B cell (primary cell): ENCODE measurements at regions of chr14 and their contacts with region 1.

Region 1: GRCh38 chr14:51979088-51979709 is 10.1 kb upstream of the RTRAF start:
- DNase-seq: peak; percentile 83
- ATAC-seq: peak; percentile 66
- H3K4me3 ChIP-seq: no peak overlapping the region
- H3K4me3 Mint-ChIP-seq: no peak overlapping the region
- H3K27ac ChIP-seq: no peak overlapping the region
- H3K27ac Mint-ChIP-seq: no peak overlapping the region
- H3K4me1 ChIP-seq: peaks cover 5 to 6% of the 10 kb centered on the region in 2 donors
- H3K4me1 Mint-ChIP-seq: peaks cover 5% of the 10 kb centered on the region
- H3K27me3 ChIP-seq: no peaks in the 10 kb centered on the region
- H3K27me3 Mint-ChIP-seq: no peaks in the 10 kb centered on the region
- CTCF ChIP-seq: peak; percentile 96

Region 2: GRCh38 chr14:51780006-51780692 is 199.1 kb before region 1 on chr14:
- CTCF ChIA-PET with region 1: interaction called, 79 read pairs
- POLR2A ChIA-PET with region 1: no interaction called
- intact Hi-C with region 1: loop called (anchors 1 kb)
- DNase-seq: peak; percentile 80
- ATAC-seq: peak; percentile 80
- H3K4me3 ChIP-seq: no peak overlapping the region
- H3K4me3 Mint-ChIP-seq: no peak overlapping the region
- H3K27ac ChIP-seq: no peak overlapping the region
- H3K27ac Mint-ChIP-seq: no peak overlapping the region
- H3K4me1 ChIP-seq: peaks cover 7 to 11% of the 10 kb centered on the region in 2 donors
- H3K4me1 Mint-ChIP-seq: peaks cover 10% of the 10 kb centered on the region
- H3K27me3 ChIP-seq: peaks cover 0 to 16% (median 4%) of the 10 kb centered on the region in 4 experiments
- H3K27me3 Mint-ChIP-seq: peaks cover 32% of the 10 kb centered on the region
- CTCF ChIP-seq: peak; percentile 90

Region 3: DNA sequence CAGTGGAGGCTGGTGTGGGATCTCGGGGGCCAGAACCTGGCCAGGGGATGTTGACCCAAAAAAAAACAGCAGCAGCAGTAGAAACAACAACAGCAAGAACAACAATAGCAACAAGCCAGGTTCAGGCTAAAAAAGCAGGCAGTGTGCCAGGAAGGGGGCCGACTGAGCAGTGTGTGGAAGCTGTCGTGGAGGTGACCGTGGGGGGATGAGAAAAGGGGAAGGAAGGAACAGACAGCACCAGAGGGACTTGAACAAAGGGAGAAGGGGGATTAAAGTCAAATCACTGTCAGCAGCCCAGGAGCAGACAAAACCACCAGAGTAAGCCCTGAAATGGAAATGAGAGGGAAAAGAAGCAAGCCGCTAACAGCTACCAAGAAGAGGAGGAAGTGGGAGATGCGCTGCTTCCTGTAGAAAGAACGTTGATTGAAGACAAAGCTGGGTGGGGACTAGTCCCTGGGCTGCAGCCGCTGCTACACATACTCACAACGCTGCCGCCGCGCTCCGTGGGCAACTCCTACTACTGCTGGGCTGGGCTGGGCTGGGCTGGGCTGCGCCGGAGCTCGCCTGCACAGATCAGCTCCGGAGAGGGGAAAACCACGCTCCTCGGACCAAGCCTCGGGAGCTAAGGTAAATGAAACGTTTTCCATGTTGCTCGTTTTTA is 118.9 kb before region 1 on chr14 and contains the start of gene GNG2:
- CTCF ChIA-PET with region 1: interaction called, 21 read pairs
- POLR2A ChIA-PET with region 1: no interaction called
- intact Hi-C with region 1: no loop called
- DNase-seq: peak; percentile 87
- ATAC-seq: peak; percentile 96
- H3K4me3 ChIP-seq: peak within 1 kb of the TSS; percentile 77 to 95 (median 86)
- H3K4me3 Mint-ChIP-seq: peak within 1 kb of the TSS; percentile 92
- H3K27ac ChIP-seq: peak within 1 kb of the TSS; percentile 80 to 84
- H3K27ac Mint-ChIP-seq: peak within 1 kb of the TSS; percentile 87
- H3K4me1 ChIP-seq: peaks cover 37 to 46% of the 10 kb centered on the region in 2 donors
- H3K4me1 Mint-ChIP-seq: peaks cover 68% of the 10 kb centered on the region
- H3K27me3 ChIP-seq: no peaks in the 10 kb centered on the region
- H3K27me3 Mint-ChIP-seq: no peaks in the 10 kb centered on the region
- CTCF ChIP-seq: no peak
- total RNA-seq, gene GNG2: 57.6 and 69.8 TPM in 2 replicates

Region 4: DNA sequence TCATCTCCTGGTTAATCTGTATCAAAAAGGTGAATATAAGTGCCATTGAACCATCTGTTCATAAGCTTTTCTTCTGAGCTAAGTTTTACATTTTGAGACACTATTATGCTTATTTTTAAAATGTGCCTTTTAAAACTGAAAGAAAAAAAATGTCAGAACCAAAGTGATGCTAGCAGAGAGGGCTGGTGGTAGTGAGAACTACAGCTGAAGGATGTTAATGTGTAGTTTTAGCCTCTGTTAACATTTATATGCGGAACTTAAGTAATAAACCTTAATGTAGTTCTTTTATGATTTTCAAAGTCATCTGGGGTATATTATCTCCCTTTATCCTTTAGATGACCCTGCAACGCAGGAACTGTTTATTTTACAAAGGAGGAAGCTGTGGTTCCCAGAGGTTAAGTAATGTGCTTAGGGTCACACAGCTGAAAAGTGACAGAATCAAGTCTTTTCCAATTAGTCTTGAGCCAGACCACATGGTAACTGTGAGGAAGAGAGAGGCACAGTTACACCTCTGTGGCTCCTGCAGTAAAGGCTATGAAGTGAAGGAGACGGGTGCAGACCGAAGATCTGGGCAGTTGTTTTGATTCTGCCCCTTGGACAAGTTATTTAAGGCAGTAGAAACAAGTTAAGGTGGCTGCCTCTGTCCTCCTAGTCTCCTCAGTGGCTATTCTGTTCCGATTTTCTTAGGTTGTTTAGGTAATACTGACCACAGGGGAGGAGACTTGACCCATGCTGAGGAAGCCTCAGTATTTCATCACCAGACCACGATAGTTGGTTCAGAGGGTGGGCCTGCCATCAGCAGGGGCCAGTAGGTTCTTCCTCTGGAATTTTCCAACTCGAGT is 94.9 kb before region 1 on chr14:
- CTCF ChIA-PET with region 1: interaction called, 5 read pairs
- POLR2A ChIA-PET with region 1: no interaction called
- intact Hi-C with region 1: loop called (anchors 5 kb)
- DNase-seq: peak; percentile 40
- ATAC-seq: peak; percentile 14
- H3K4me3 ChIP-seq: no peak overlapping the region
- H3K4me3 Mint-ChIP-seq: peak overlapping the region; percentile 17
- H3K27ac ChIP-seq: peak overlapping the region; percentile 8 to 19
- H3K27ac Mint-ChIP-seq: peak overlapping the region; percentile 67
- H3K4me1 ChIP-seq: peaks cover 31 to 39% of the 10 kb centered on the region in 2 donors
- H3K4me1 Mint-ChIP-seq: peaks cover 55% of the 10 kb centered on the region
- H3K27me3 ChIP-seq: no peaks in the 10 kb centered on the region
- H3K27me3 Mint-ChIP-seq: no peaks in the 10 kb centered on the region
- CTCF ChIP-seq: no peak

Region 5: GRCh38 chr14:51963286-51963685 is 15.9 kb before region 1 on chr14:
- CTCF ChIA-PET with region 1: interaction called, 30 read pairs
- POLR2A ChIA-PET with region 1: no interaction called
- intact Hi-C with region 1: no loop called
- DNase-seq: no peak
- ATAC-seq: no peak
- H3K4me3 ChIP-seq: no peak overlapping the region
- H3K4me3 Mint-ChIP-seq: no peak overlapping the region
- H3K27ac ChIP-seq: no peak overlapping the region
- H3K27ac Mint-ChIP-seq: no peak overlapping the region
- H3K4me1 ChIP-seq: no peaks in the 10 kb centered on the region
- H3K4me1 Mint-ChIP-seq: peaks cover 14% of the 10 kb centered on the region
- H3K27me3 ChIP-seq: no peaks in the 10 kb centered on the region
- H3K27me3 Mint-ChIP-seq: no peaks in the 10 kb centered on the region
- CTCF ChIP-seq: no peak

Region 6: DNA sequence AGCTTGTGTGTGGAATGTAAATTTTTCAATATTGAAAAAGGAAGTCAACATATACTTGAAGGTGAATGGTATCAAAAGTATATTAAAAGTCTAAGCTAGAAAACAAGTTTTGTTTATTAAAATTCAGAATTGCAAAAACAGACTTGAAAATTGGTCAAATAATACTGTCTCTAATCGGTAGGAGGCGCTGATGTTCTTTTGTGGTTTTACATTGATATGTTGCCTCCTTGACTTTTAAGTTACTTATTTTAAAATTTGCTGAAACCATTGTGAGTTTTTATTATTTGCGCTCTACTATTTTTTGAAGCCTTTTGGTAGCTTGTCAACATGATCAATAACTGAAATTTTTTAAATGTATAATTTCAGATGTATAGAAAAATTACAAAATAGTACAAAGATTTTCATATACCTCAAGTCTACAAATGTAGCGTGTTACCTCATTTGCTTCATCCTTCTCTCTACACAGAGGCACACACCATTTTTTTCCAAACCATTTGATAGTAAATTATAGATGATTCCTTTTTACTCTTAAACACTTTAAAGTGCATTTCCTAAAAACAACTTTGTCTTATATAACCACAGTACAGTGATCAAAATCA is 17.0 kb after region 1 on chr14:
- CTCF ChIA-PET with region 1: interaction called, 20 read pairs
- POLR2A ChIA-PET with region 1: no interaction called
- intact Hi-C with region 1: no loop called
- DNase-seq: peak; percentile 53
- ATAC-seq: no peak
- H3K4me3 ChIP-seq: no peak overlapping the region
- H3K4me3 Mint-ChIP-seq: no peak overlapping the region
- H3K27ac ChIP-seq: no peak overlapping the region
- H3K27ac Mint-ChIP-seq: no peak overlapping the region
- H3K4me1 ChIP-seq: peaks cover 0 to 5% of the 10 kb centered on the region in 2 donors
- H3K4me1 Mint-ChIP-seq: peaks cover 23% of the 10 kb centered on the region
- H3K27me3 ChIP-seq: no peaks in the 10 kb centered on the region
- H3K27me3 Mint-ChIP-seq: no peaks in the 10 kb centered on the region
- CTCF ChIP-seq: peak; percentile 86